ENCODE measurements at regions of chr14 and their contacts with region 1.

Region 1: DNA sequence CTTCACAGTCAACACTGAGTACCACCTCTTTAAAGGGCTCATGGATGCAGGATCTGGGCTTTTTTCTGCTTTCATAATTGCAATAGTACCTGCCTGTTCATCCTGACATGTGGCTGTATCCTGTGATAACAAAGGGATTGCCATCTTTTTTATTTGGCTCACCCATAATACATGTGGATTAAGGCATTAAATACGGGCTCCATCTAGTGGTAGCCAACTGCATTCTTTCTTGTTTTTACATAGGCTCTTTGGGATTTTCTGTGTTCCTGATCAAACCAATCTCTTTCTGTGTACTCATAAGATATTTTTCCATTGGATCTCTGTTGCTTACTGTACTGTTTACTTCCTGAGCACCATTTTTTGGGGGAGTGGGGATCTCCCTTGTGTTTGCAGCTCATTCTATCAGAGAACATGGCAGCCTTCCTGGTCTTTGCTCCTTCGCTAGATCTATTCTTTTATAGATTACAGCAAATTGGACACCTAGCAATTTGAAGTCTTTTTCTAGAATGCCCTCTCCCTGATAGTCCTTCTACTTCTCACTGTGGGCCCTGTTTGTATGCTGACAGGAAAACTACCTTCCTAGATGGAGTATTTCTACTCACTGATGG is 723.4 kb upstream of the MDGA2 start:
- DNase-seq: no peak
- H3K4me3 Mint-ChIP-seq: no peak overlapping the region
- H3K27ac Mint-ChIP-seq: no peak overlapping the region
- H3K4me1 Mint-ChIP-seq: no peaks in the 10 kb centered on the region
- H3K27me3 Mint-ChIP-seq: no peaks in the 10 kb centered on the region

Region 2: GRCh38 chr14:46581036-46581671 is 1817.6 kb before region 1 on chr14:
- CTCF ChIA-PET with region 1: no interaction called
- intact Hi-C with region 1: loop called (anchors 10 kb)
- DNase-seq: peak; percentile 21
- H3K4me3 Mint-ChIP-seq: no peak overlapping the region
- H3K27ac Mint-ChIP-seq: no peak overlapping the region
- H3K4me1 Mint-ChIP-seq: no peaks in the 10 kb centered on the region
- H3K27me3 Mint-ChIP-seq: no peaks in the 10 kb centered on the region

Region 3: GRCh38 chr14:47919997-47920396 is 478.8 kb before region 1 on chr14:
- CTCF ChIA-PET with region 1: no interaction called
- intact Hi-C with region 1: loop called (anchors 2 kb)
- DNase-seq: no peak
- H3K4me3 Mint-ChIP-seq: no peak overlapping the region
- H3K27ac Mint-ChIP-seq: no peak overlapping the region
- H3K4me1 Mint-ChIP-seq: peaks cover 3% of the 10 kb centered on the region
- H3K27me3 Mint-ChIP-seq: no peaks in the 10 kb centered on the region

Region 4: GRCh38 chr14:49173765-49174373 is 775.1 kb after region 1 on chr14:
- CTCF ChIA-PET with region 1: no interaction called
- intact Hi-C with region 1: loop called (anchors 10 kb)
- DNase-seq: peak; percentile 67
- H3K4me3 Mint-ChIP-seq: no peak overlapping the region
- H3K27ac Mint-ChIP-seq: no peak overlapping the region
- H3K4me1 Mint-ChIP-seq: no peaks in the 10 kb centered on the region
- H3K27me3 Mint-ChIP-seq: peaks cover 4% of the 10 kb centered on the region